ENCODE measurements at regions of chr2 and their contacts with region 1.

Region 1: GRCh38 chr2:9251154-9252001 is 44.8 kb downstream of the ASAP2 start:
- DNase-seq: peak in 1 of 2 donors; percentile 85
- H3K4me3 ChIP-seq: peak overlapping the region in 1 of 2 donors; percentile 10
- H3K27ac ChIP-seq: peak overlapping the region; percentile 62 to 73
- H3K4me1 ChIP-seq: peaks cover 13 to 47% of the 10 kb centered on the region in 2 donors
- H3K27me3 ChIP-seq: no peaks in the 10 kb centered on the region
- CTCF ChIP-seq: no peak

Region 2: GRCh38 chr2:9287400-9288043 is 36.1 kb after region 1 on chr2:
- intact Hi-C with region 1: loop called (anchors 5 kb)
- DNase-seq: peak in 1 of 2 donors; percentile 86
- H3K4me3 ChIP-seq: no peak overlapping the region
- H3K27ac ChIP-seq: peak overlapping the region; percentile 74 to 76
- H3K4me1 ChIP-seq: peaks cover 11 to 39% of the 10 kb centered on the region in 2 donors
- H3K27me3 ChIP-seq: no peaks in the 10 kb centered on the region
- CTCF ChIP-seq: no peak